ENCODE measurements at regions of chr7 and their contacts with region 1.

Region 1: DNA sequence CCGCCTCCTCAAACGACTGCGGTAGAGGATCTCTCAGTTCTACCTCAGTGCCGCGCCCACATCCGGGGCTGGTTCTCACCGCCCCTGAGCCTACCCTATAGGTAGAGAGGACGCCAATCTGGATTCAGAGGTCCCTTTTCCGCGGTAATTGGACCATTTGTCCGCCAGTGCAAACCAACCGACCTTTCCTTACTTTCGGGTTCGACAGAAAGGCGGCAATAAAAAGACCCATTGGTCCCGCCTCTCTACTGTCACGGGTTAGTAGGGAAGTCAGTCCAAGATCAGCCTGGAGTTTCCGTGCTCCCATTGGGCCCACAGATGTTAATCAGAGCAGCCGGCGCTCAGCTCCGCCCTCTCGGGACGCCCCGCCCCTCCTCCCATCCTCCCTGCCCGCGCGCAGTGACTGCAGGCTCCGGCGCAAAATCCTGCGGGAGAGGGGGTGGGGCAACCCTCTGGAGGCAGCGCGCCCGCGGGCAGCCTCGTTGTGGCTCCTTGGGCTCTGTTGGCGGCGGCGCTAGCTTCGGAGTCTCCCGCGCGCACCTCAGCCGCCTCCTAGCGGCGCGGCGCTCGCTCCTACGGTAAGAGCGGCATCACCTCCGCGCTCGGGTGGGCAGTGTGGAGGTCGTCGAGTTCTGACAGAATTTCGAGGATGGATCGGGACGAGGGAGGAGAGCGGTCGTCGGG is at the starts of genes PHTF2 and TMEM60:
- DNase-seq: peak; percentile 94
- H3K4me3 Mint-ChIP-seq: peak within 1 kb of the TSS; percentile 96
- H3K27ac Mint-ChIP-seq: peak within 1 kb of the TSS; percentile 96
- H3K4me1 Mint-ChIP-seq: peaks cover 63% of the 10 kb centered on the region
- H3K27me3 Mint-ChIP-seq: no peaks in the 10 kb centered on the region
- total RNA-seq, gene PHTF2: 31.8 and 34.8 TPM in 2 replicates
- total RNA-seq, gene TMEM60: 11.5 and 11.6 TPM in 2 replicates

Region 2: GRCh38 chr7:77696198-77697028 is 102.1 kb before region 1 on chr7 and contains the start of gene RSBN1L:
- intact Hi-C with region 1: loop called (anchors 1 kb)
- DNase-seq: peak; percentile 98
- H3K4me3 Mint-ChIP-seq: peak within 1 kb of the TSS; percentile 92
- H3K27ac Mint-ChIP-seq: peak within 1 kb of the TSS; percentile 95
- H3K4me1 Mint-ChIP-seq: peaks cover 37% of the 10 kb centered on the region
- H3K27me3 Mint-ChIP-seq: no peaks in the 10 kb centered on the region
- total RNA-seq, gene RSBN1L: 28.1 and 28.8 TPM in 2 replicates

Region 3: DNA sequence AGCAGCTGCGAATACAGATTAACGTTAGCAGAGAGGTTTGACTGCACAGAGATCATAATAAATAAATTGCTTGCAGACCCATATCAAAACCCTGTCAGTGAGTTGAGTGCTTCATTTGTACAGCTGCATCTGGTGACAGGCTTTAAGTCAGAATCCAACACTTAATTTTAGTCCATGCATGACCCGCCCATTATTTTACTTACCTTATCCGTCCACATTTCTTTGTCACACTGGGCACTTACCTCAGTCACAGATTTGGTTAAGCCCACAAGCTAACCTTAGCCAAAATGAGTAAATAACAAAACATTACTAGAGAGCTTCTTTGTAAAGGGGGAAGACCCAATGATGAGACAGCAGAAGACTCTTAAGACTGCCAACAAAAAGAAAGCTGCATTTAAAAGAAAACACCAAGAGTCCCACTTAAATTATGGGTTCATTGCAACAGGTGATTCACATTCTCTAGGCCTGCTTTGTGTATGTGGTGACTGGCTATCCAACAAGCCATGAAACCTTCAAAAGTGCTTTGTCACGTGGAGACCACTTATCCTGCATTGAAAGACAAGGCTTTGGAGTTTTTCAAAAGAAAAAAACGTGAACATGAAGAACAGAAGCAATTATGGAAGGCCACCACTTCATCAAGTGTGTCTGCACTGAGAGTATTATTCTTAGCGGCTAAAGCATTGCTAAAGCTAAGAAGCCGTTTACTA is 32.3 kb after region 1 on chr7:
- intact Hi-C with region 1: loop called (anchors 1 kb)
- DNase-seq: no peak
- H3K4me3 Mint-ChIP-seq: no peak overlapping the region
- H3K27ac Mint-ChIP-seq: no peak overlapping the region
- H3K4me1 Mint-ChIP-seq: peaks cover 51% of the 10 kb centered on the region
- H3K27me3 Mint-ChIP-seq: no peaks in the 10 kb centered on the region

Region 4: DNA sequence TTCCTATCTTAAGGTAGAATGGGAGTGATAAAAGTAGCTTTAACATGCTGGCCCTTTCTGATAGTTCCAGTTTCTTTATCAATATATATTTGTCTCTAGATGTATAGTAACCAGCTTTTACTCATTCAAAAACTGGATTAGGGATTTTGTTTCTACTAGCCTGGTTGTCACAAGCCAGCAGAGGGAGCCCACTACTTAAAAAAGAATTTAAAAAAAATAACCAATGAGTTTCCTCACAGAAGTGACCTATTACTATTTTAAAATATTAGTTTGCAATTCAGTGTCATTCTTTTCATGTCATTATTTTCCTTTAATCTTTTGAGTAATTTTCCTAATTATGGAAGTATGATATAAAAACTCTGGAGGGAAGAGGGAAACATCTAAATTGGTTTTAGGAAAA is 142.1 kb after region 1 on chr7:
- intact Hi-C with region 1: loop called (anchors 2 kb)
- DNase-seq: no peak
- H3K4me3 Mint-ChIP-seq: no peak overlapping the region
- H3K27ac Mint-ChIP-seq: no peak overlapping the region
- H3K4me1 Mint-ChIP-seq: peaks cover 15% of the 10 kb centered on the region
- H3K27me3 Mint-ChIP-seq: no peaks in the 10 kb centered on the region